Adrenal gland (tissue), 19 donors: ENCODE measurements at regions of chr9 and their contacts with region 1.

Region 1: GRCh38 chr9:22307013-22307711 is 139.5 kb upstream of the DMRTA1 start:
- DNase-seq: peak in 6 of 7 donors; percentile 19 to 45 (median 28)
- H3K4me3 ChIP-seq: no peak overlapping the region
- H3K27ac ChIP-seq: no peak overlapping the region
- H3K4me1 ChIP-seq: no peaks in the 10 kb centered on the region
- H3K27me3 ChIP-seq: no peaks in the 10 kb centered on the region
- CTCF ChIP-seq: peak; percentile 35 to 57 (median 52)
- POLR2A ChIP-seq: no peak

Region 2: GRCh38 chr9:22452415-22453010 is 145.4 kb after region 1 on chr9:
- intact Hi-C with region 1: loop called (anchors 5 to 10 kb)
- DNase-seq: peak in 5 of 7 donors; percentile 19 to 74 (median 57)
- H3K4me3 ChIP-seq: no peak overlapping the region
- H3K27ac ChIP-seq: no peak overlapping the region
- H3K4me1 ChIP-seq: peaks cover 0 to 2% of the 10 kb centered on the region in 2 donors
- H3K27me3 ChIP-seq: peaks cover 38% of the 10 kb centered on the region
- CTCF ChIP-seq: peak; percentile 57 to 81 (median 66)
- POLR2A ChIP-seq: no peak

Region 3: DNA sequence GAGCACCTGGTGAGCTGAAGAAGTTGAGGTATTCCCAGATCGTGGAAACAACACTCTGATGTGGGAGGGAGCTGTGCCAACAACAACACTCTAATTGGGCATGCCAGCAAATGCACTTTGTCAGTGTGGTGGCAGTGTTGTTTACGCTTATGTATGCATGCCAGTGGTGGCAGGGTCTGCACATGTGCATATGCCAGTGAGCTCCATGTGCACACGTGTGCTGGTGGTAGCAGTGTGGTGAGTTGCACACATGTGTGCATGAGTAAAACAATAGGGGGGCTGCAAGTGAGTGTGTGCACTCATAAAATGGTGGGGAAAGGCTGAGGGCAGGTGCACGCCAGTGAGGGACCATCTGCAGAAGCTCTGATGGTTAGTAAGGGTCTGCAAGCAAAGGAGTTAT is 273.6 kb after region 1 on chr9:
- intact Hi-C with region 1: no loop called
- DNase-seq: no peak
- H3K4me3 ChIP-seq: no peak overlapping the region
- H3K27ac ChIP-seq: no peak overlapping the region
- H3K4me1 ChIP-seq: no peaks in the 10 kb centered on the region
- H3K27me3 ChIP-seq: no peaks in the 10 kb centered on the region
- CTCF ChIP-seq: no peak
- POLR2A ChIP-seq: no peak